ENCODE measurements at regions of chr12 and their contacts with region 1.

Region 1: GRCh38 chr12:55996715-55997534 is at the start of gene SUOX:
- DNase-seq: peak; percentile 97 to 98 (median 97)
- ATAC-seq: peak; percentile 99 to 100 (median 100)
- H3K4me3 ChIP-seq: peak within 1 kb of the TSS; percentile 27 to 82 (median 68)
- H3K27ac ChIP-seq: peak within 1 kb of the TSS; percentile 63 to 94 (median 87)
- H3K4me1 ChIP-seq: peaks cover 0 to 21% (median 11%) of the 10 kb centered on the region in 12 donors
- H3K27me3 ChIP-seq: no peaks in the 10 kb centered on the region
- CTCF ChIP-seq: no peak
- POLR2A ChIP-seq: peak in 1 of 2 donors; percentile 64
- total RNA-seq, gene SUOX: 25.0 to 59.5 (median 32.0) TPM

Region 2: GRCh38 chr12:56029666-56030293 is 32.9 kb after region 1 on chr12:
- intact Hi-C with region 1: loop called in 1 of 10 experiments (anchors 5 kb)
- DNase-seq: peak in 1 of 5 donors; percentile 36
- ATAC-seq: peak in 1 of 4 donors; percentile 58
- H3K4me3 ChIP-seq: no peak overlapping the region
- H3K27ac ChIP-seq: no peak overlapping the region
- H3K4me1 ChIP-seq: peaks cover 0 to 2% (median 0%) of the 10 kb centered on the region in 12 donors
- H3K27me3 ChIP-seq: no peaks in the 10 kb centered on the region
- CTCF ChIP-seq: peak; percentile 34 to 66 (median 53)
- POLR2A ChIP-seq: no peak

Measured in heart left ventricle (tissue), 16 donors.